ENCODE measurements at regions of chr3 and their contacts with region 1.

Region 1: GRCh38 chr3:42635111-42635510 is 18.4 kb upstream of the ZBTB47 start:
- DNase-seq: no peak
- H3K4me3 Mint-ChIP-seq: no peak overlapping the region
- H3K27ac Mint-ChIP-seq: peak overlapping the region; percentile 67
- H3K4me1 Mint-ChIP-seq: peaks cover 11% of the 10 kb centered on the region
- H3K27me3 Mint-ChIP-seq: no peaks in the 10 kb centered on the region

Region 2: GRCh38 chr3:42502429-42503250 is 132.5 kb before region 1 on chr3 and contains the start of gene VIPR1:
- CTCF ChIA-PET with region 1: no interaction called
- intact Hi-C with region 1: loop called (anchors 1 kb)
- DNase-seq: peak; percentile 94
- H3K4me3 Mint-ChIP-seq: peak within 1 kb of the TSS; percentile 90
- H3K27ac Mint-ChIP-seq: peak within 1 kb of the TSS; percentile 76
- H3K4me1 Mint-ChIP-seq: peaks cover 35% of the 10 kb centered on the region
- H3K27me3 Mint-ChIP-seq: peaks cover 16% of the 10 kb centered on the region
- total RNA-seq, gene VIPR1: 6.3 to 8.4 TPM

Region 3: DNA sequence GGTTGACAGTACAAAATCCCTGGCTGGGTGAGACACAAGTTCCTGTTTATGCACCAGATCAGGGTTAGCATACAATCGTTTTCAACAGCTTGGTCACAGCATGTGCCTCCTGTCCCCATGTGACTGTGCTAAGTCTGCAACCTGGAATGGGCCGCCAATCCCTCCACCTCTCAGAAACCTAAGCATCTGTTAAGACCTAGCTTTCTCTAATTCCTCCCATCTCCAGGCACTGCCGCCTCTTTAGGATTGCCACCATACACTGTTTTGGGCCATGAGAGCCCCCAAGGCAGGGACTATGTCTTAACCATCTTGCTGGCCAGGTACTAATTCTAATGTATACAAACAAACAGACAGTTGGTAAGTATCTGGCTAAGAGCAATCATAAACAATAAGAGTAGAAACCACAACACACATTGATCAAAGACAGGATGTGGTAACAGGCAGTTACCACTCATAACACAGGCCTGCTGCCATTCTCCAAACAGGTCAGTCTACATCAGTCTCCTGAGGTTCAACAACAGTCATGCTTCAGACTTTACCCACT is 79.0 kb before region 1 on chr3:
- CTCF ChIA-PET with region 1: no interaction called
- intact Hi-C with region 1: loop called (anchors 1 kb)
- DNase-seq: peak; percentile 53
- H3K4me3 Mint-ChIP-seq: no peak overlapping the region
- H3K27ac Mint-ChIP-seq: peak overlapping the region; percentile 80
- H3K4me1 Mint-ChIP-seq: peaks cover 24% of the 10 kb centered on the region
- H3K27me3 Mint-ChIP-seq: no peaks in the 10 kb centered on the region

Region 4: GRCh38 chr3:42590989-42591756 is 43.9 kb before region 1 on chr3:
- CTCF ChIA-PET with region 1: interaction called, 15 read pairs
- intact Hi-C with region 1: loop called (anchors 2 kb)
- DNase-seq: no peak
- H3K4me3 Mint-ChIP-seq: peak overlapping the region; percentile 96
- H3K27ac Mint-ChIP-seq: peak overlapping the region; percentile 84
- H3K4me1 Mint-ChIP-seq: peaks cover 35% of the 10 kb centered on the region
- H3K27me3 Mint-ChIP-seq: no peaks in the 10 kb centered on the region

Region 5: DNA sequence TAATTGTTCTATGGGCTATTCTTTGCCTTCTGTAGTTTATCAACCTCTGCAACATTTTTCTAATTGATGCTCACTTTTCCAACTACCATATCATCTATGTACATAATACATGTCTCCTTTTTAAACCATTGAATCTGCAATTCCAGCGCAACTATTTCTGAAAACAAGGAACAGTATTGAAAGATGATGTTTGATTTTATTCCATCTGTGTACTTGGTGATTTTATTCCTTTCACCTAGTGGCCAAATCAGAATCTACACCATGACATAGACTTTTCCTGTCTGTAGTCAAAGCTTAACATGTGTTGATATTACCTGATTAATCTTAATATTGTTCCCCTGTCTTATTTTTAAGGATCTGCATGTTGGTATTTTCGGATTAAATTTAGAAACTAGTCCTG is 21.6 kb before region 1 on chr3:
- CTCF ChIA-PET with region 1: interaction called, 10 read pairs
- intact Hi-C with region 1: loop called (anchors 1 kb)
- DNase-seq: no peak
- H3K4me3 Mint-ChIP-seq: no peak overlapping the region
- H3K27ac Mint-ChIP-seq: peak overlapping the region; percentile 2
- H3K4me1 Mint-ChIP-seq: peaks cover 59% of the 10 kb centered on the region
- H3K27me3 Mint-ChIP-seq: no peaks in the 10 kb centered on the region

Region 6: GRCh38 chr3:42749753-42750231 is 114.7 kb after region 1 on chr3:
- CTCF ChIA-PET with region 1: interaction called, 3 read pairs
- intact Hi-C with region 1: loop called (anchors 1 kb)
- DNase-seq: peak; percentile 29
- H3K4me3 Mint-ChIP-seq: no peak overlapping the region
- H3K27ac Mint-ChIP-seq: no peak overlapping the region
- H3K4me1 Mint-ChIP-seq: peaks cover 26% of the 10 kb centered on the region
- H3K27me3 Mint-ChIP-seq: no peaks in the 10 kb centered on the region